Posterior vena cava (tissue), 2 donors: ENCODE measurements at regions of chr9 and their contacts with region 1.

Region 1: DNA sequence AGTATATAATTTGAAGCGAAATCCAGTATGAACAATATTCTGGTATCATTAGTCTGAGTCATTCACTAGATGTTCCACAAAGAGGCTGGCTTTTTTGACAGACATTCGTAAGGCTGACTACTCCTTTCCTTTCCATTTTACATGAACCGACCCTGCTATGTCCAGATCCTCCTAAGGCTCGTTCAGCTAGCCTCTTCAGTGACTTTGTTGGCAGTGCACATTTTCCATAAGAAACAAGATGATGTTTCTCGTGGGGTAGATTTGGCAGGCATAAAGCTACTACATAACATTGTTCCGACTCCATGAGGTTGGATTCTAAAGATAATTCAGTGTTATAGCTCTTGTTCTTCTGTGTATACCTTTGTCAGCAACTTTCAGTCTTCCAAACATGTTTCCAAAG is 49.0 kb downstream of the ZNF462 start:
- DNase-seq: no peak

Region 2: GRCh38 chr9:106092083-106092482 is 819.9 kb before region 1 on chr9:
- intact Hi-C with region 1: loop called in 1 of 2 experiments (anchors 5 kb)
- DNase-seq: no peak

Region 3: GRCh38 chr9:108800632-108801099 is 1888.7 kb after region 1 on chr9:
- intact Hi-C with region 1: no loop called
- DNase-seq: no peak